SK-N-SH (cell line): ENCODE measurements at regions of chr2 and their contacts with region 1.

Region 1: GRCh38 chr2:23188658-23189057 is 196.3 kb upstream of the KLHL29 start:
- DNase-seq: no peak
- H3K4me3 ChIP-seq: no peak overlapping the region
- H3K27ac ChIP-seq: no peak overlapping the region
- H3K4me1 ChIP-seq: no peaks in the 10 kb centered on the region
- H3K27me3 ChIP-seq: no peaks in the 10 kb centered on the region
- CTCF ChIP-seq: no peak
- EP300 ChIP-seq: no peak
- RAD21 ChIP-seq: no peak

Region 2: GRCh38 chr2:23009545-23010149 is 179.0 kb before region 1 on chr2:
- CTCF ChIA-PET with region 1: no interaction called
- POLR2A ChIA-PET with region 1: no interaction called
- DNase-seq: no peak
- H3K4me3 ChIP-seq: no peak overlapping the region
- H3K27ac ChIP-seq: no peak overlapping the region
- H3K4me1 ChIP-seq: no peaks in the 10 kb centered on the region
- H3K27me3 ChIP-seq: no peaks in the 10 kb centered on the region
- CTCF ChIP-seq: no peak
- EP300 ChIP-seq: no peak
- RAD21 ChIP-seq: no peak

Region 3: GRCh38 chr2:23199115-23199918 is 10.7 kb after region 1 on chr2:
- CTCF ChIA-PET with region 1: interaction called, 24 read pairs
- POLR2A ChIA-PET with region 1: no interaction called
- DNase-seq: peak; percentile 34
- H3K4me3 ChIP-seq: no peak overlapping the region; a peak in 1 of 4 replicates
- H3K27ac ChIP-seq: no peak overlapping the region
- H3K4me1 ChIP-seq: no peaks in the 10 kb centered on the region; a peak in 1 of 4 replicates
- H3K27me3 ChIP-seq: no peaks in the 10 kb centered on the region
- CTCF ChIP-seq: peak; percentile 77
- EP300 ChIP-seq: no peak
- RAD21 ChIP-seq: peak; percentile 51